Heart right ventricle (tissue), 16 donors: ENCODE measurements at regions of chr6 and their contacts with region 1.

Region 1: DNA sequence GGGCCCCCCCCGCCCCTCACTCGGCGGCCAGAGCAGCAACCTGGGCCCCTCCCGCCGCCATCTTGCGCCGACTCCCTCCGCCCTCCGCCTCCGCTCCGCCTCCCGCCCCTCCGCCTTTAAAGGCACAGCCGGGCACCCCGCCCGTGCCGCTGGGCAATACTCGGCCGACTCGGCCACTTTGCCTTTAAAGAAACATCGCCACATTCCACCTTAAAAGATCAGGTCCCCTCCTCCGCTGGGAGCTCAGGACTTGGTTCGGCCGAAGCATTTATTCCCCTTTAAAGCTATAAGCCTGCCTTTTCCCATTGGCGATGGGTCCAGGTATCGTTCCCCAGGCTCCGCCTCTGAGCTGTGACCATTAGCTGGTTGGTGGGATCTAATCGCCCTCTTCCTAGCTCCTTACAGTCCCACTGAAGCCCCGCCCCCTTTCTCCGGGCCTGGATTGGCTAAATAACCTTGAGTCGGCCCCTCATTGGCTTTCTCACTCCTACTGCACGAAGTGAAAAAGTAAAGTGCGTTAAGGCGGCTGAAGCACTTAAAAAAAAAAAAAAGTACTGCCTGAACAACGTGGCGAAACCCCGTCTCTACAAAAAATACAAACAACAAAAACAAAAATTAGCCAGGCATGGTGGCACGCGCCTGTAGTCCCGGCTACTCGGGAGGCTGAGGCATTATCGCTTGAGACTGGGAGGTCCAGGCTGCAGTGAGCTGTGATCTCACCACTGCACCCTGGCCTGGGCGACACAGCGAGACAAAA is at the start of gene ZBTB22:
- DNase-seq: peak; percentile 97 to 99
- ATAC-seq: peak; percentile 76 to 86 (median 80)
- H3K4me3 ChIP-seq: peak within 1 kb of the TSS; percentile 5 to 73 (median 60)
- H3K27ac ChIP-seq: peak within 1 kb of the TSS in 9 of 10 donors; percentile 75 to 93 (median 86)
- H3K4me1 ChIP-seq: peaks cover 14 to 70% (median 63%) of the 10 kb centered on the region in 9 donors
- H3K27me3 ChIP-seq: no peaks in the 10 kb centered on the region
- CTCF ChIP-seq: no peak
- total RNA-seq, gene ZBTB22: 11.7 to 19.8 (median 14.3) TPM

Region 2: DNA sequence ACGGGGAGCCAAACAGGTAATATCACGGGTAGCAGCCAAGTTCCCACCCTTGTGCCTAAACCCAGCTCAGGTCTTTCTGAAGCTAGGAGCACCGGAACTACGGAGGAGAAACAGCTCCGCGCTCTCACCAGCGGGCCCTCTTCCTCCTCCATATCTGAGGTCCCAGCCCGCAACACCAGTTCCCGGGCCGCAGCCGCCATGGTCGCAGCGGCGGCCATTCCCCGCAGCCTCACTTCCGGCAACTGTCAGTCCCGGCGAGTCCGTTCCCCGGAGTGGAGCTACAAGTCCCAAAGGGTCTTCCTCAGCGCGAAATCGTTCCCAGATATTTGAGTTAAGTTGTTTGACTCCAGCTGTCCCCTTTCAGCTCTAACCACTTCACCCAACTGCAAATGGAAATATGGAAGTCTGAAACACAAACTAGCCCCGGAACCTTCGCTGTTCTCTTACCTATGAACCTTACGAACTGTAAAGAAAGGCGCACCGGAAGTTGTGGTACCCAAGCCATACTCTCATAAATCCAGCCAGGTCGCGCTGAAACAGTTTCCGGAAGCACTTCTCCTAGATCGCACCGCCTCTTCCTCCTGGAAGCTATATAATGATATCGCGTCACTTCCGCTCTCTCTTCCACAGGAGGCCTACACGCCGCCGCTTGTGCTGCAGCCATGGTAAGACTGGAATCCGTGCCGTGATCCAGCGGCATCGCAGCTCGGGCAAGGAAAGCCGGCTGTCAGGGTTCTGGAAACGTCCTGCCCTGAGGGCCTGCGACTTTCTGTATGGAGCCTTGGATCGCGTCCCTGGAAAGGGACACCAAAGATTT is 46.2 kb before region 1 on chr6 and contains the starts of genes RPS18 and VPS52:
- intact Hi-C with region 1: loop called in 1 of 10 experiments (anchors 2 kb)
- DNase-seq: peak; percentile 83 to 96
- ATAC-seq: peak; percentile 94 to 98 (median 98)
- H3K4me3 ChIP-seq: peak within 1 kb of the TSS; percentile 70 to 88 (median 80)
- H3K27ac ChIP-seq: peak within 1 kb of the TSS; percentile 87 to 98 (median 93)
- H3K4me1 ChIP-seq: peaks cover 10 to 62% (median 53%) of the 10 kb centered on the region in 9 donors
- H3K27me3 ChIP-seq: no peaks in the 10 kb centered on the region
- CTCF ChIP-seq: no peak
- total RNA-seq, gene RPS18: 767 to 1,326 (median 860) TPM
- total RNA-seq, gene VPS52: 29.8 to 41.6 (median 35.9) TPM

Region 3: DNA sequence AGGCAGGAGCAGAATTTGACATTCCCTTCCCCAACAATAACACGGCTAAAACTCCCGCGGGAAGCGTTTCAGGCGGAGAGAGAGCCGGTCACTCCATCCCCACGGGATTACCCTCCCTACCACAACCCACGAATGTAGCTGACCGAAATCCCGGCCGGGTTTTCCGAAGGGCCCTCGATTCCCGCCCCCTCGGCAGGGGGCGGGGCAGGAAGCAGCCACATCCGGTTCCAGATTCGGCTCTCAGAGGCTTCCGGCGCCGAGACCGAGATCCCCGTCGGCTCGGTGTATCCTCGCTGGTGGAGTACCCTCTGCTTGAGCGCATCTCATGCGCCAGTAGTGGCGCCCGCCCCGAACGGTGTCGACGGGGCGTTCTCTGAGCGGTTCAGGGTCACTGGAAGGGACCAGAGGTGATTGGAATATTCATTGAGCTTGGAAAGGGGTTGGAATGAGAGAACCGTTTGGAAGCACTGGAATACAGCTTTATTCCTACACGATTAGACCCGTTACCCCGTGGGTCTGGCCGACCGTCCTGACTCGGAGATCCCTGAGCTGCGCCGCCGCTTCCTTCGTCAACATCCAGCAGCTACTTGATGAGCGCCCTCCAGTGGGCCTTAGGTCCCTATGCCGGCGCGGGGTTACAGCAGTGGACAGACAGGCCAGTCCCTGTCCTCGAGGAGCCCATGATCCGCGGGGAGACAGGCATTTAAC is 18.5 kb before region 1 on chr6:
- intact Hi-C with region 1: loop called in 3 of 10 experiments (anchors 2 kb)
- DNase-seq: peak; percentile 93 to 95
- ATAC-seq: peak; percentile 76 to 90 (median 84)
- H3K4me3 ChIP-seq: peak overlapping the region; percentile 65 to 97 (median 80)
- H3K27ac ChIP-seq: peak overlapping the region; percentile 85 to 99 (median 98)
- H3K4me1 ChIP-seq: peaks cover 11 to 41% (median 37%) of the 10 kb centered on the region in 9 donors
- H3K27me3 ChIP-seq: no peaks in the 10 kb centered on the region
- CTCF ChIP-seq: peak; percentile 55 to 90 (median 80)

Region 4: GRCh38 chr6:33417903-33418689 is 100.2 kb after region 1 on chr6 and contains the start of gene CUTA:
- intact Hi-C with region 1: loop called in 2 of 10 experiments (anchors 10 kb)
- DNase-seq: peak; percentile 99
- ATAC-seq: peak; percentile 94 to 98 (median 96)
- H3K4me3 ChIP-seq: peak within 1 kb of the TSS; percentile 40 to 80 (median 70)
- H3K27ac ChIP-seq: peak within 1 kb of the TSS; percentile 59 to 94 (median 90)
- H3K4me1 ChIP-seq: peaks cover 16 to 48% (median 41%) of the 10 kb centered on the region in 9 donors
- H3K27me3 ChIP-seq: no peaks in the 10 kb centered on the region
- CTCF ChIP-seq: peak in 8 of 9 donors; percentile 29 to 69 (median 46)
- total RNA-seq, gene CUTA: 99.8 to 132 (median 114) TPM